Uterus (tissue), 4 donors: ENCODE measurements at regions of chr3 and their contacts with region 1.

Region 1: GRCh38 chr3:159804726-159805410 is 183.8 kb upstream of the IL12A start:
- DNase-seq: peak; percentile 64 to 79
- H3K4me3 ChIP-seq: no peak overlapping the region
- H3K27ac ChIP-seq: peak overlapping the region; percentile 48 to 70
- H3K4me1 ChIP-seq: peaks cover 0 to 6% of the 10 kb centered on the region in 2 donors
- H3K27me3 ChIP-seq: no peaks in the 10 kb centered on the region
- CTCF ChIP-seq: peak; percentile 80 to 87 (median 85)
- POLR2A ChIP-seq: no peak

Region 2: DNA sequence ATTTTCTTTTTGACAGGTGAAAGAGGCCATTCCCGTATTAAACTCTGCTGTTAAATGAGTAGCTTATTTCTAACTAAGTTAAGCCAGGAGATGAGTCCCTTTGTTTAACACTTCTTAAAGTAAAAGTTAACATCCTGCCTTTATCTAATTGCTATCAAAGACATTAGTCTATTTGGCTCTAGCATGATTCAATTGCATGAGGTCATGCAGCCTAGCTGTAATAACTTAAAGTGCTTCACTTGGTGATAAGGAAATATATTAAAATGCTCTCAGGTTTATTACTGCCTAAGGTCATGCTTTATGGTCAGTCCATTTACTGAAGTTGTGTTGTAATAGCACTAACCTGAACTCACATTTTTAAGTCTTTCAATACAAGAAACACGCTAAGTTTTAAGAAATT is 1316.2 kb before region 1 on chr3:
- intact Hi-C with region 1: no loop called
- DNase-seq: no peak
- H3K4me3 ChIP-seq: no peak overlapping the region
- H3K27ac ChIP-seq: no peak overlapping the region
- H3K4me1 ChIP-seq: peaks cover 0 to 4% of the 10 kb centered on the region in 2 donors
- H3K27me3 ChIP-seq: no peaks in the 10 kb centered on the region
- CTCF ChIP-seq: no peak
- POLR2A ChIP-seq: no peak

Region 3: GRCh38 chr3:159609625-159610024 is 195.2 kb before region 1 on chr3:
- intact Hi-C with region 1: loop called (anchors 5 kb)
- DNase-seq: no peak
- H3K4me3 ChIP-seq: no peak overlapping the region
- H3K27ac ChIP-seq: no peak overlapping the region
- H3K4me1 ChIP-seq: no peaks in the 10 kb centered on the region
- H3K27me3 ChIP-seq: no peaks in the 10 kb centered on the region
- CTCF ChIP-seq: no peak
- POLR2A ChIP-seq: no peak

Region 4: DNA sequence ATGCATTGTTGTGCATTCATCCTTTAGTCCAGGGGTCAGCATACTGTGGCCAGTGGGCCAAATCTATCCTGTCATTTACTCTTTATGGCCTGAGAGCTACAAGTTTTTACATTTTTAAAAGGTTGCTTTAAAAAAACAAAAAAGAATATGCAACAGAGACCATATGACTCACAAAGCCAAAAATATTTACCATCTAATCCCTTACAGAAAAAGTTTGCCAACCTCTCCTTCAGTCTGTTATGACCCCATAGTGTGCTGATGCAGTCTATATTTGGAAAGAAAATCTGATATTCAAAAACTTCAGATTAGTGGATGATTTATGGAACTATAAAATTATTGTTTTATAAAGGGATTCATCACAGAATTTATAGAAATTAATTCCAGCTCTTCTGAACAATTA is 53.7 kb before region 1 on chr3:
- intact Hi-C with region 1: no loop called
- DNase-seq: no peak
- H3K4me3 ChIP-seq: no peak overlapping the region
- H3K27ac ChIP-seq: no peak overlapping the region
- H3K4me1 ChIP-seq: no peaks in the 10 kb centered on the region
- H3K27me3 ChIP-seq: no peaks in the 10 kb centered on the region
- CTCF ChIP-seq: no peak
- POLR2A ChIP-seq: no peak

Region 5: GRCh38 chr3:159988617-159989271 is 183.9 kb after region 1 on chr3 and contains the start of gene IL12A:
- intact Hi-C with region 1: no loop called
- DNase-seq: peak; percentile 71 to 75
- H3K4me3 ChIP-seq: peak within 1 kb of the TSS; percentile 69 to 71
- H3K27ac ChIP-seq: peak within 1 kb of the TSS; percentile 14 to 29
- H3K4me1 ChIP-seq: no peaks in the 10 kb centered on the region
- H3K27me3 ChIP-seq: no peaks in the 10 kb centered on the region
- CTCF ChIP-seq: peak; percentile 66 to 91 (median 78)
- POLR2A ChIP-seq: peak in 1 of 2 donors; percentile 16
- total RNA-seq, gene IL12A: 0.73 TPM in 1 of 4 donors, not detected in the others